ENCODE measurements at regions of chr15 and their contacts with region 1.

Region 1: GRCh38 chr15:52069559-52069958 is 43.0 kb downstream of the BCL2L10 start:
- DNase-seq: no peak
- ATAC-seq: no peak
- H3K4me3 ChIP-seq: no peak overlapping the region
- H3K27ac ChIP-seq: no peak overlapping the region
- H3K4me1 ChIP-seq: no peaks in the 10 kb centered on the region
- H3K27me3 ChIP-seq: no peaks in the 10 kb centered on the region
- CTCF ChIP-seq: no peak
- POLR2A ChIP-seq: no peak
- RAD21 ChIP-seq: no peak

Region 2: DNA sequence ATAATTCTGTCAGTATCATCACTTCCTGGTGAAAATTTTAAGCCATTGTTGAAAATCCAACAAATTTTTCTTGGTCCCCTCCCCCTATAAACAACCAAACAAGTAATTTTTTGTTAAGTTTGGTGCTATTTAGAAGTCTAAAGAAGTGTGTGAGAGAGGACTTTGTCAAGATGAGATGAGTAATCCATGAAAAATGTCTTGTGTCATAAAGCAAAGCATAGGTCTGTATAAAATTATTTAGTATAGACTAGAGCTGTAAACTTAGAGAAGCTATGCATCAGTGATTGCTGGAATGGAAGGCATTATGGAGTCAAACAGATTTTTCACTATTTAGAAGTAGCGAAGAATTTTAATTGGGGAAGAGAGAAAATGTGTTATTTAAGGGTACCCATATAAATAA is 19.1 kb before region 1 on chr15:
- CTCF ChIA-PET with region 1: interaction called, 3 read pairs
- POLR2A ChIA-PET with region 1: interaction called, 10 read pairs
- dilution Hi-C with region 1: no loop called
- in situ Hi-C with region 1: no loop called
- intact Hi-C with region 1: no loop called
- DNase-seq: peak; percentile 77
- ATAC-seq: peak; percentile 79
- H3K4me3 ChIP-seq: no peak overlapping the region
- H3K27ac ChIP-seq: no peak overlapping the region
- H3K4me1 ChIP-seq: peaks cover 6% of the 10 kb centered on the region
- H3K27me3 ChIP-seq: no peaks in the 10 kb centered on the region
- CTCF ChIP-seq: no peak
- POLR2A ChIP-seq: no peak
- RAD21 ChIP-seq: no peak

Region 3: DNA sequence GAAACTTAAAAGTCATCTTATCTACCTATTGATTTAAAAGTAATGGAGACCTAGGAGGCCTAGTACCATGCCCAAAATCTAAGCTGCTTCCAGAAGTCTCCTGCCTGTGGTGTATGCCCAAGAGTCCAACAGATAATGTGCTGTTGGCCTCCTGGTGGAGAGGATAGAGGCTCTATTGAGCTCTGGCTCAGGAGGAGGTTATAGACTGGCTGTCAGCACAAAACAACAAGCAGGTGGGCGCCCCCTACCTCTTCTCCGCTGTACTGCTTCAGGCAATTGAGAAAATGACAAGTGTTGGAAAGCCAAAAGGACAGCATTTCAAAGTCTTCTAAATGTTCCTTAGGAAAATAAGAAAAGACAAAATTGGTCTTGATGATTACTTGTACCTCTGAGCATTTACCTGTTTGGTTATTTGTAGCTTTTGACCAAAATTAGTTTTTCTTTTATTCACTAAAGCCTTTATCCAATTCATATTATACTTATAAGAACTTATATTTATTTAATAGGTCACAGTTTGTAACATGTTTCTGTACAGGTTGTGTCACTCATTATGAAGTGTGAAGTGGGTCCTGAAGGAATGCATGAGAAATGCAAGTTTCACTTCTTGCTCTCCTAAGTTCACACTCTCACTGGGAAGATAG is 138.9 kb after region 1 on chr15:
- CTCF ChIA-PET with region 1: no interaction called
- POLR2A ChIA-PET with region 1: no interaction called
- dilution Hi-C with region 1: no loop called
- in situ Hi-C with region 1: no loop called
- intact Hi-C with region 1: no loop called
- DNase-seq: peak; percentile 67
- ATAC-seq: peak; percentile 88
- H3K4me3 ChIP-seq: no peak overlapping the region
- H3K27ac ChIP-seq: no peak overlapping the region
- H3K4me1 ChIP-seq: no peaks in the 10 kb centered on the region
- H3K27me3 ChIP-seq: peaks cover 25% of the 10 kb centered on the region
- CTCF ChIP-seq: peak; percentile 84
- POLR2A ChIP-seq: no peak
- RAD21 ChIP-seq: peak; percentile 63

Measured in IMR-90 (cell line).